ENCODE measurements at regions of chr7 and their contacts with region 1.

Region 1: GRCh38 chr7:30974605-30975255 is 11.0 kb downstream of the GHRHR start:
- DNase-seq: peak; percentile 60
- ATAC-seq: peak; percentile 96
- H3K4me3 ChIP-seq: no peak overlapping the region
- H3K27ac ChIP-seq: peak overlapping the region; percentile 19
- H3K4me1 ChIP-seq: peaks cover 13% of the 10 kb centered on the region
- H3K27me3 ChIP-seq: no peaks in the 10 kb centered on the region; a peak in 1 of 4 replicates
- CTCF ChIP-seq: peak; percentile 90 to 96 (median 93); a peak in 5 of 6 replicates
- EP300 ChIP-seq: peak; percentile 78; a peak in 2 of 4 replicates
- POLR2A ChIP-seq: no peak
- RAD21 ChIP-seq: peak; percentile 82

Region 2: GRCh38 chr7:30743371-30744074 is 231.2 kb before region 1 on chr7:
- CTCF ChIA-PET with region 1: no interaction called
- POLR2A ChIA-PET with region 1: no interaction called
- RAD21 ChIA-PET with region 1: no interaction called
- SMC1A ChIA-PET with region 1: no interaction called
- in situ Hi-C with region 1: no loop called
- intact Hi-C with region 1: no loop called
- DNase-seq: no peak
- ATAC-seq: peak; percentile 49
- H3K4me3 ChIP-seq: no peak overlapping the region
- H3K27ac ChIP-seq: no peak overlapping the region
- H3K4me1 ChIP-seq: no peaks in the 10 kb centered on the region
- H3K27me3 ChIP-seq: no peaks in the 10 kb centered on the region; a peak in 2 of 4 replicates
- CTCF ChIP-seq: peak; percentile 4 to 25 (median 10); a peak in 2 of 6 replicates
- EP300 ChIP-seq: no peak
- POLR2A ChIP-seq: no peak
- RAD21 ChIP-seq: 0 out of 2 replicates have a peak, but pooled peaks have one; percentile 18

Region 3: DNA sequence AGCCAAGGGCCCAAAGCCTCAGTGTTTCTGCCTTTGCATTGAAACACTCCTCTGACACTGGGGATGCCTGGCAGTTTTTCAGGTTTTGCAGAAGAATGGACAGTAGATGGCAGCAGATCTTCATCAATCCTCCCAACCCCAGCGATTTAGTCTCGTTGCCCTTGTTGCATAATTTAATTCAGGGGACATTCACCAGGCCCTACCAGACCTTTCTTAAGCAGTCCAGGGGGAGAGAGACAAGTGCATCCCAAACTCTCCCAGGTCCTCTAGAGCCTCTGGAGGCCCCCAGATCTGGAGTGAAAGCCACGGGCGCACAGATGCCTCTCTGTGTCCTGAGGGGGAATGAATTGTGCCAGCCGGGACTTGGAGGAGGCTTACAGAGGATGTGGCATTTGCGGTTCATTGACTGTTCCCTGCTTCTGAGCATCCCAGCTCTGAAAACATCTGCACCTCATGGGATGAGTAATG is 173.9 kb before region 1 on chr7:
- CTCF ChIA-PET with region 1: interaction called, 19 read pairs
- POLR2A ChIA-PET with region 1: interaction called, 3 read pairs
- RAD21 ChIA-PET with region 1: interaction called, 18 read pairs
- SMC1A ChIA-PET with region 1: interaction called, 9 read pairs
- in situ Hi-C with region 1: loop called (anchors 5 kb)
- intact Hi-C with region 1: loop called (anchors 1 kb)
- DNase-seq: peak; percentile 21
- ATAC-seq: peak; percentile 77
- H3K4me3 ChIP-seq: no peak overlapping the region
- H3K27ac ChIP-seq: no peak overlapping the region
- H3K4me1 ChIP-seq: peaks cover 18% of the 10 kb centered on the region
- H3K27me3 ChIP-seq: no peaks in the 10 kb centered on the region
- CTCF ChIP-seq: peak; percentile 60 to 91 (median 73)
- EP300 ChIP-seq: no peak
- POLR2A ChIP-seq: no peak
- RAD21 ChIP-seq: peak; percentile 83

Measured in GM12878 (cell line).